Activated T-helper 1 cell treated with anti-CD3 and anti-CD28 coated beads, Interleukin-12 subunit alpha, Interleukin-12 subunit beta, Interleukin-2, Interleukin-4 antibody, amounts not matched to agents 30 ng/mL and 10 ng/mL and 1 ng/mL, durations not matched to agents 14 hours and 24 hours and 36 hours (primary cell): ENCODE measurements at regions of chr4 and their contacts with region 1.

Region 1: DNA sequence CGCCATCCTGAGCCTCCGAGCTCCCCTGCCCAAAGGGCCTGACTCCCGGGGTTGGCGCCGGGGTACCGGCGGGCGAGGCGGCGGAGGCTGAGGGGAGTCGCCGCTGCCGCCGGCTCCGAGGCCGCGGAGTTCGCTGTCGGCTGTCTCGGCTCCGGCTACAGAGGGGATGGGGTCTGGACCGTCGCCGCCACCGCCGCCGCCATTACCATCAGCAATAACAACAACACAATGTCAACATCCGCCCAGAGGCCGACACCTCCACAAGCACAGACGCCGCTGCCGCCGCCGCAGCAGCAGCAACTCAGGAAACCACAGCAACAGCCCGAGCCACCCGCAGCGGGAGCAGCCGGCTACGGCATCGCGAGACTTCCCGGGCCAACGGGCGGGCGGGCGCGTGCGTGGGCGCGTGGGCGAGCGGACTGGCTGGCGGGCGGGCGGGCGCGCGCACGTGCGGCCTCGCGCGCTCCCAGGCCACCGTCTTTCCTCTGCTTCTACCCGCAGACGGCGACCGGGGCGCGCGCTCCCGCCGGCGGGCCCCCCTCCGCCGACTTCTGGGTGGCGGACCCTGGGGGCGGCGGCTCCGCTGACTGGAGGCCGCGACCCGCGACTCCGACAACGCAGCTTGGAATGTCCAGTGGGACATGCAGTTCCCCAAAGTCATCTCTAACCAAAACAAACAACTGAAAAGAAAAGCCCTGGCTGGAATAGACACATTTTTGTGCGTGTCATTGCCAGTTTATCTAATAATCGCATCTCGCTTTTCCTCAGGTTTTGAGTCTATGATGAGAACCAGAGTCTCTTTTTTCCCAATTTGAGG is at the start of gene CHIC2:
- DNase-seq: peak; percentile 96
- H3K4me3 Mint-ChIP-seq: peak within 1 kb of the TSS; percentile 91
- H3K27ac Mint-ChIP-seq: peak within 1 kb of the TSS; percentile 94
- H3K4me1 Mint-ChIP-seq: peaks cover 46% of the 10 kb centered on the region
- H3K27me3 Mint-ChIP-seq: no peaks in the 10 kb centered on the region
- total RNA-seq, gene CHIC2: 19.1 and 20.3 TPM in 2 replicates

Region 2: DNA sequence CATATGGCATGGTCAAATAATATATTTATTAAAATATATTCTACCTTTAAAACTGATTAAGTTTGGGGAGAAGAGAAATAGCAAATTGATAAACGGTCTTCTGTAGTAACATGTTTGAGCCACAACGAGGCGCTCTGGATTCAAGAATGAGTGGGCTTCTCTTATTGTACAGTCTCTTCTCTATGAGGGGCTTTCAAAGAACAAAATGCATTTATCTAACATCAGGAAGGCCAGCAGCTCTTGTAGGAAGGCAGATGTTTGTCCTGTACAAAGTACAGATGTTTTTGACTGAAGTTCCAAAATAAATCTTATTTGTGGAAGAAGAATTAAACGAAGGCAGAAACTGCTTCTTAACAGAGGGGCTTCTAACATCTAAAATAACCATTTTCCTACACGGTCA is 1048.8 kb before region 1 on chr4:
- intact Hi-C with region 1: loop called (anchors 10 kb)
- DNase-seq: no peak
- H3K4me3 Mint-ChIP-seq: no peak overlapping the region
- H3K27ac Mint-ChIP-seq: no peak overlapping the region
- H3K4me1 Mint-ChIP-seq: peaks cover 24% of the 10 kb centered on the region
- H3K27me3 Mint-ChIP-seq: no peaks in the 10 kb centered on the region

Region 3: DNA sequence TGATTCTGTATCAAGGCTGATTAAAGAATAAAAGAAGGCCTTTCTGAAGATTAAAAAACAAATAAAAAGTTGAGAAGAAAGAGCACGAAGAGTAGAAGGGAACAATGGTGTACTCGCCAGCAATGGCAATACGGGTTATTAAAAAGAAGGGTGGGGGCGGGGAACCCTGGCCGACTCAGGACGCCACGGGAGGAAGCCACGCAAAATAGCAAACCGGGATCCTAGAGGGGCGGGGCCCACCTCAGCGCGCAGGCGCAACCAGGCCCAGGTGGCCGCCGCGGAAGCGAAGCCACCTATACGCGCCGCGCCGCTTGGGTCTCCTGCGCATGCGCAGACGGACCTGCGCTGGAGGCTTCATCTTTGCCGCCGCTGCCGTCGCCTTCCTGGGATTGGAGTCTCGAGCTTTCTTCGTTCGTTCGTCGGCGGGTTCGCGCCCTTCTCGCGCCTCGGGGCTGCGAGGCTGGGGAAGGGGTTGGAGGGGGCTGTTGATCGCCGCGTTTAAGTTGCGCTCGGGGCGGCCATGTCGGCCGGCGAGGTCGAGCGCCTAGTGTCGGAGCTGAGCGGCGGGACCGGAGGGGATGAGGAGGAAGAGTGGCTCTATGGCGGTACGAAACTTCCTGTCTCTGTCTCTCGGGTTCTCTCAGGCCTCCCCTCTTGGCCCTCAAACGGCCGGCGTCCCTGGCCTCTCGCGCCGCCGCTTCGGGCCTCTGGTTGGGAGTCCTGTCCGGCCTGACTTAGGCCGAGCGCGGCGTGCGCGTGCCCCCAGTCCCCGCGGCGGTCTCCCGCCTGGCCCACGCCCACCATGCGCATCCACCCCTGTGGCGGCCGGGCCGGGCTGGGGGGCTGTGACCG is 687.0 kb before region 1 on chr4 and contains the start of gene FIP1L1:
- intact Hi-C with region 1: loop called (anchors 2 kb)
- DNase-seq: peak; percentile 94
- H3K4me3 Mint-ChIP-seq: peak within 1 kb of the TSS; percentile 92
- H3K27ac Mint-ChIP-seq: peak within 1 kb of the TSS; percentile 96
- H3K4me1 Mint-ChIP-seq: peaks cover 46% of the 10 kb centered on the region
- H3K27me3 Mint-ChIP-seq: peaks cover 6% of the 10 kb centered on the region
- total RNA-seq, gene FIP1L1: 118 and 123 TPM in 2 replicates

Region 4: DNA sequence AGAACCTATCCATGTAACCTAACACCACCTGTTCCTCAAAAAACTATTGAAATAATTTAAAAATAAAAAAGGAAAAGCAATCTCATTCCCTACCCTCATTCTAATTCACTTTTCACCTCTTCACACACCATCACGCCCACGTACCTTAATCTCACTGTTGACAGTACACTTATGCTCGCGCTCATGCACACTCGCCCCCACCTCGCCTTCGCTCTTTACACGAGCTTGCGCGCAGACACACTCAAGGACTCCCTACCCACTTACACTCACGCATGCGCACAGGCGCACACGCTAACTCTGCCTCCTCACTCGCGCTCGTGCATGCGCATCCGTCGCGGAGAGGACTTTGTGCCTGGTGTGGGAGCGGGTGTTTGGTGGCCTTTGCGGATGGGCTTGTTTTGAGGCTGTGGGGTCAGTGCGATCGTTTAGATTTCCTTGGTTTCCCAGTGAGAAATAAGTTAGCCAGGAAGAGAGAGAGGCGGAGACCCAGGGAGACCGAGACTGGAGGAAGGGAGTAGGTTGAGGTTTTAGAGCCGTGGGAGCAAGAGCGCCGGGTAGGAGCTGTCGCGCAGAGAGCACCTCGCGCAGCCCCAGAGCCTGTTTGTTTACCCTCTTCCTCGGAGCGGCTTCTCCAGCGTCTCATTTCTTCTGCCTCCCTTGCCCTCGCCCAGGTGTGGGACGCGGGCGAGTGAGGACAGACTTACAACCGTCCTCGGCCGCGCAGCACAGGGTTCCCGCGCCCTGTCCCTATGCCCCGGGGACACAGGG is 27.3 kb after region 1 on chr4:
- intact Hi-C with region 1: loop called (anchors 1 kb)
- DNase-seq: peak; percentile 71
- H3K4me3 Mint-ChIP-seq: peak overlapping the region; percentile 82
- H3K27ac Mint-ChIP-seq: peak overlapping the region; percentile 30
- H3K4me1 Mint-ChIP-seq: peaks cover 30% of the 10 kb centered on the region
- H3K27me3 Mint-ChIP-seq: peaks cover 74% of the 10 kb centered on the region

Region 5: DNA sequence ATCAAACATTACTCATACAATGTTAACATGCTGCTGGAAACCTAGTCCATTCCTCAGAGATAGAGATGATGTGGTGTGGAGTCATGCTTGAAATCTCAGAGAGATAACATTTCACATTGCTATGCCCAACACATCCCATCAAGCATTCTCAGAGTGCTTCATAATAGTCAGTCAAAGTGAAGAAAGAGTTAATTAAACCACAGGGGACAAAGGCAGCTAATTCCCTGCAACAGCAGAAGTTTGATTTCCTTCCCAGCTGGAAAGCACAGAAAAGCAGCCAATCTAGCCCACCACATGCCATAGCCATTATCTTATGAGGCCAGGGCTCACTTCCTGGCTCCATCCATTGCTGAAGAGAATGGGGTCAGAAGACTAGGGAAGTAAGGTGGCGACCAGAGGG is 1051.9 kb after region 1 on chr4:
- intact Hi-C with region 1: no loop called
- DNase-seq: no peak
- H3K4me3 Mint-ChIP-seq: no peak overlapping the region
- H3K27ac Mint-ChIP-seq: no peak overlapping the region
- H3K4me1 Mint-ChIP-seq: no peaks in the 10 kb centered on the region
- H3K27me3 Mint-ChIP-seq: no peaks in the 10 kb centered on the region

Region 6: GRCh38 chr4:55345980-55346850 is 1281.7 kb after region 1 on chr4 and contains the start of gene SRD5A3:
- intact Hi-C with region 1: loop called (anchors 10 kb)
- DNase-seq: peak; percentile 74
- H3K4me3 Mint-ChIP-seq: peak within 1 kb of the TSS; percentile 89
- H3K27ac Mint-ChIP-seq: peak within 1 kb of the TSS; percentile 92
- H3K4me1 Mint-ChIP-seq: peaks cover 36% of the 10 kb centered on the region
- H3K27me3 Mint-ChIP-seq: no peaks in the 10 kb centered on the region
- total RNA-seq, gene SRD5A3: 32.4 and 33.2 TPM in 2 replicates